Endothelial cell of umbilical vein (primary cell): ENCODE measurements at regions of chr18 and their contacts with region 1.

Region 1: GRCh38 chr18:41992066-41992465 is 37.0 kb downstream of the PIK3C3 start:
- DNase-seq: peak; percentile 49
- H3K4me3 ChIP-seq: no peak overlapping the region
- H3K27ac ChIP-seq: peak overlapping the region; percentile 42
- H3K4me1 ChIP-seq: peaks cover 20% of the 10 kb centered on the region
- H3K27me3 ChIP-seq: no peaks in the 10 kb centered on the region
- CTCF ChIP-seq: no peak
- POLR2A ChIP-seq: no peak

Region 2: DNA sequence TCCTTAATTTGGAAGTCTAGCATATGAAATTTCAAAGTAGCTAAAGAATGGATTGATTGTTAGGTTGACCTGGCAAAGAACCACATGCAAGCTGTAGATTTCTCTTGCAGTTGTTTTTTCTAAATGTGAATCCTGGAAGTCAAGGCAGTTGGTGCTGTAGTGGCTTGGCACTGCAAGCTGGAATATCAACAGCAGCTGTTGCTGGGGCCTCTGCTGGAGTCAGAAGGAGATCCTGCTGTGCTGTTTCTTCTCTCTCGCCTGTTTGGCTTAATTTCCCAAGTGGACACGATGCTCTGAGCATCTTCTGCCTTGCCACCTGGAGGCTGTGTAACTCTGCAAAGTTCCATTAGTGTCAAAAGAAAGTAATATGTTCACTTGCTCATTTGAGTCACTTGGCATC is 24.4 kb before region 1 on chr18:
- CTCF ChIA-PET with region 1: interaction called, 4 read pairs
- POLR2A ChIA-PET with region 1: interaction called, 7 read pairs
- dilution Hi-C with region 1: no loop called
- intact Hi-C with region 1: loop called (anchors 1 kb)
- DNase-seq: no peak
- H3K4me3 ChIP-seq: no peak overlapping the region
- H3K27ac ChIP-seq: no peak overlapping the region
- H3K4me1 ChIP-seq: no peaks in the 10 kb centered on the region
- H3K27me3 ChIP-seq: no peaks in the 10 kb centered on the region
- CTCF ChIP-seq: no peak
- POLR2A ChIP-seq: no peak